ENCODE measurements at regions of chr2 and their contacts with region 1.

Region 1: DNA sequence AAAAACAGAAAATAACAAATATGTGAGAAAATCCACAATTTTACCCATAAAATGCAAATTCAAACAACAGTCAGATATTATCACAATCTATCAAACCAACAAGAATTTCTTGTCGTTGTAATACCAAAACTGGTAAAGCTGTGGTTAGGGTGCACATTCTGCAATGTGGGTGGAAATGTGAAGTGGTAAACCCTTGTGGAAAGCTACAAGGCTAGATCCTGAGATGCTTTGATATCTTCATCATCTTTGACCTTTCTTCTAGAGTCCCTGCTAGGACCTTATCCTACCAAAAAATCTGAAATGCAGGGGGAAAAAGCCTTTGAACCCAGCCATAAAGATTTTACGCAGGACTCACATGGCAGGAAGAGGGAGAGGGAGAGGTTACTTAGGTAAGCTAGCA is 17.2 kb upstream of the ATG16L1 start:
- DNase-seq: no peak
- ATAC-seq: no peak
- H3K4me3 ChIP-seq: no peak overlapping the region
- H3K27ac ChIP-seq: no peak overlapping the region
- H3K4me1 ChIP-seq: no peaks in the 10 kb centered on the region
- H3K27me3 ChIP-seq: no peaks in the 10 kb centered on the region
- CTCF ChIP-seq: no peak

Region 2: GRCh38 chr2:233044974-233045605 is 189.2 kb before region 1 on chr2:
- CTCF ChIA-PET with region 1: interaction called, 14 read pairs
- POLR2A ChIA-PET with region 1: no interaction called
- in situ Hi-C with region 1: no loop called
- intact Hi-C with region 1: no loop called
- DNase-seq: no peak
- ATAC-seq: no peak
- H3K4me3 ChIP-seq: no peak overlapping the region
- H3K27ac ChIP-seq: no peak overlapping the region
- H3K4me1 ChIP-seq: no peaks in the 10 kb centered on the region
- H3K27me3 ChIP-seq: no peaks in the 10 kb centered on the region
- CTCF ChIP-seq: no peak

Region 3: DNA sequence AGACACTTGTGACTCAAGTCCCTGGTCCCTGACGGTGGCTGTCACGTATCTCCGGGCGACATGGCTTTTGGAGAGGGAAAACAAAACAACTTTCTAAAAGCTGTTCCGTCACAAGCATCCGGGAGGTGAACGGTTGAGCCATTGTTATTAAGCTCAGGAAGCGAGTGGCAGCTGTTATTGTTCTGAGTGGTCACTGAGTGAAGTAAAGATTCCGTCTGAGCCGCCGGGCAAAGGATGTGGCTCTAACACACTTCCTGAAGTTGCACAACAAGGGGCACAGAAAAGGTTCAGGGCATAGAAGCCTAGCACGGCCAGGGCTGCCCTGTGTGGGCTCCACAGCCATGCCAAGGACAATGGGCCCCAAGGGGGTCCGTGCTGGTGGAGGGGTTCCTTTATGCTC is 149.8 kb before region 1 on chr2:
- CTCF ChIA-PET with region 1: no interaction called
- POLR2A ChIA-PET with region 1: no interaction called
- in situ Hi-C with region 1: loop called (anchors 10 kb)
- intact Hi-C with region 1: no loop called
- DNase-seq: no peak
- ATAC-seq: no peak
- H3K4me3 ChIP-seq: no peak overlapping the region
- H3K27ac ChIP-seq: no peak overlapping the region
- H3K4me1 ChIP-seq: no peaks in the 10 kb centered on the region
- H3K27me3 ChIP-seq: no peaks in the 10 kb centered on the region
- CTCF ChIP-seq: no peak